ENCODE measurements at regions of chr2 and their contacts with region 1.

Region 1: DNA sequence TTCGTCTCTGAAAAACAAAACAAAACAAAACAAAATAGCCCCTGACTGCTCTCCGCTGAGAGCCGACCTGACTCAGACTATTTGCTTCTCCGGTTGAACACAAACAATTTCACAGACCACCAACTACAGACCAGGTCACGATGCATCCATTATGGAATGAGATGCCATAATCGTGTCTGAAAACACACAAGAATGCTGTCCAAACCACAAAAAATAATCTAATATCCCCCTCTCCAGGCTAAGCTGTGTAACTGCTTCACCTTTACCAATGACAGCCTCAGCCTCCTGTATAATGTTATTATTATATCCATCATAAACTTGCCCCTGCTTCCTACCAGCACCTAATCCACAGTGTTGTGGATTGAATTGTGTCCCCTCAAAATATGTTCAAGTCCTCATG is 114.7 kb downstream of the DNAH6 start:
- DNase-seq: peak in 1 of 2 experiments; percentile 60
- H3K4me3 ChIP-seq: no peak overlapping the region
- H3K4me3 Mint-ChIP-seq: no peak overlapping the region
- H3K27ac Mint-ChIP-seq: no peak overlapping the region
- H3K4me1 ChIP-seq: no peaks in the 10 kb centered on the region
- H3K4me1 Mint-ChIP-seq: peaks cover 6% of the 10 kb centered on the region
- H3K27me3 ChIP-seq: no peaks in the 10 kb centered on the region
- H3K27me3 Mint-ChIP-seq: no peaks in the 10 kb centered on the region
- CTCF ChIP-seq: peak; percentile 65 to 80

Region 2: GRCh38 chr2:84314901-84315330 is 316.1 kb before region 1 on chr2:
- CTCF ChIA-PET with region 1: no interaction called
- POLR2A ChIA-PET with region 1: no interaction called
- intact Hi-C with region 1: loop called (anchors 5 kb)
- DNase-seq: peak; percentile 88 to 91
- H3K4me3 ChIP-seq: no peak overlapping the region
- H3K4me3 Mint-ChIP-seq: no peak overlapping the region
- H3K27ac Mint-ChIP-seq: no peak overlapping the region
- H3K4me1 ChIP-seq: no peaks in the 10 kb centered on the region
- H3K4me1 Mint-ChIP-seq: peaks cover 7% of the 10 kb centered on the region
- H3K27me3 ChIP-seq: no peaks in the 10 kb centered on the region; the same call in 1 of the 2 replicates
- H3K27me3 Mint-ChIP-seq: no peaks in the 10 kb centered on the region
- CTCF ChIP-seq: peak; percentile 95 to 97

Region 3: GRCh38 chr2:84459018-84459943 is 171.8 kb before region 1 on chr2 and contains the start of gene SUCLG1:
- CTCF ChIA-PET with region 1: no interaction called
- POLR2A ChIA-PET with region 1: no interaction called
- intact Hi-C with region 1: loop called (anchors 1 kb)
- DNase-seq: peak; percentile 88
- H3K4me3 ChIP-seq: peak within 1 kb of the TSS; percentile 77
- H3K4me3 Mint-ChIP-seq: peak within 1 kb of the TSS; percentile 97
- H3K27ac Mint-ChIP-seq: peak within 1 kb of the TSS; percentile 96
- H3K4me1 ChIP-seq: peaks cover 38% of the 10 kb centered on the region
- H3K4me1 Mint-ChIP-seq: peaks cover 35% of the 10 kb centered on the region
- H3K27me3 ChIP-seq: no peaks in the 10 kb centered on the region
- H3K27me3 Mint-ChIP-seq: no peaks in the 10 kb centered on the region
- CTCF ChIP-seq: no peak
- total RNA-seq, gene SUCLG1: 155 and 161 TPM in 2 replicates

Region 4: GRCh38 chr2:84495539-84496146 is 135.4 kb before region 1 on chr2:
- CTCF ChIA-PET with region 1: interaction called, 5 read pairs
- POLR2A ChIA-PET with region 1: no interaction called
- intact Hi-C with region 1: loop called (anchors 1 kb)
- DNase-seq: peak in 1 of 2 experiments; percentile 54
- H3K4me3 ChIP-seq: no peak overlapping the region
- H3K4me3 Mint-ChIP-seq: no peak overlapping the region
- H3K27ac Mint-ChIP-seq: no peak overlapping the region
- H3K4me1 ChIP-seq: no peaks in the 10 kb centered on the region
- H3K4me1 Mint-ChIP-seq: peaks cover 5% of the 10 kb centered on the region
- H3K27me3 ChIP-seq: no peaks in the 10 kb centered on the region
- H3K27me3 Mint-ChIP-seq: no peaks in the 10 kb centered on the region
- CTCF ChIP-seq: peak; percentile 54 to 73

Region 5: DNA sequence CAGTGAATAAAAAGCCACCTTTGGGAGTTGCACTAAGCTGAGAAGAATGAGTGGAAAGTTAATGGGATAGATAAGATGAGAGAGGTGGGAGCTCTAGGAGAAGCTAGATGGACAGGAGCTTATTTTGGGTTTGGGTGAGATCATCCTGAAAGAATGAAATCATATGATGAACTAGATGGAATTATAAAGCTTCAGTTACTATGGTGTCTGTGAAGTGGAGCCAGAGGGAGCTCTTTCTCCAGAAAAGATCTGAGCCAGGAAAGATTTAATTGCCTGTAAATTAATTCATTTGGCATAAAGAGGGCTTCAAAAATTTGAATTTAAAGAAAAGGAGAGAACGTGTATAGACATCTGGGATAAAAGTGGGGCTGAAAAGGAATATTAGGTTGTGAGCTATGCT is 104.5 kb before region 1 on chr2:
- CTCF ChIA-PET with region 1: interaction called, 3 read pairs
- POLR2A ChIA-PET with region 1: no interaction called
- intact Hi-C with region 1: loop called (anchors 1 kb)
- DNase-seq: no peak
- H3K4me3 ChIP-seq: no peak overlapping the region
- H3K4me3 Mint-ChIP-seq: no peak overlapping the region
- H3K27ac Mint-ChIP-seq: peak overlapping the region; percentile 4
- H3K4me1 ChIP-seq: peaks cover 15% of the 10 kb centered on the region
- H3K4me1 Mint-ChIP-seq: peaks cover 9% of the 10 kb centered on the region
- H3K27me3 ChIP-seq: no peaks in the 10 kb centered on the region
- H3K27me3 Mint-ChIP-seq: no peaks in the 10 kb centered on the region
- CTCF ChIP-seq: no peak

Region 6: GRCh38 chr2:84865181-84865783 is 234.2 kb after region 1 on chr2:
- CTCF ChIA-PET with region 1: no interaction called
- POLR2A ChIA-PET with region 1: no interaction called
- intact Hi-C with region 1: loop called (anchors 5 kb)
- DNase-seq: no peak
- H3K4me3 ChIP-seq: no peak overlapping the region
- H3K4me3 Mint-ChIP-seq: no peak overlapping the region
- H3K27ac Mint-ChIP-seq: no peak overlapping the region
- H3K4me1 ChIP-seq: no peaks in the 10 kb centered on the region
- H3K4me1 Mint-ChIP-seq: no peaks in the 10 kb centered on the region
- H3K27me3 ChIP-seq: no peaks in the 10 kb centered on the region; the same call in 1 of the 2 replicates
- H3K27me3 Mint-ChIP-seq: no peaks in the 10 kb centered on the region
- CTCF ChIP-seq: peak in 1 of 2 experiments; percentile 15

Region 7: GRCh38 chr2:84881581-84882414 is 250.8 kb after region 1 on chr2:
- CTCF ChIA-PET with region 1: no interaction called
- POLR2A ChIA-PET with region 1: no interaction called
- intact Hi-C with region 1: loop called (anchors 1 kb)
- DNase-seq: peak; percentile 80 to 84
- H3K4me3 ChIP-seq: peak overlapping the region; percentile 30
- H3K4me3 Mint-ChIP-seq: peak overlapping the region; percentile 81
- H3K27ac Mint-ChIP-seq: no peak overlapping the region
- H3K4me1 ChIP-seq: peaks cover 11% of the 10 kb centered on the region; the same call in 1 of the 2 replicates
- H3K4me1 Mint-ChIP-seq: peaks cover 7% of the 10 kb centered on the region
- H3K27me3 ChIP-seq: no peaks in the 10 kb centered on the region
- H3K27me3 Mint-ChIP-seq: peaks cover 22% of the 10 kb centered on the region
- CTCF ChIP-seq: peak; percentile 76 to 87